Breast epithelium (tissue), 4 donors: ENCODE measurements at regions of chr11 and their contacts with region 1.

Region 1: GRCh38 chr11:124556828-124557227 is 13.0 kb upstream of the OR8A1 start:
- DNase-seq: no peak
- H3K4me3 ChIP-seq: no peak overlapping the region
- H3K27ac ChIP-seq: no peak overlapping the region
- H3K4me1 ChIP-seq: no peaks in the 10 kb centered on the region
- H3K27me3 ChIP-seq: no peaks in the 10 kb centered on the region
- CTCF ChIP-seq: no peak
- POLR2A ChIP-seq: no peak

Region 2: GRCh38 chr11:123775289-123775688 is 781.5 kb before region 1 on chr11:
- intact Hi-C with region 1: loop called (anchors 5 kb)
- DNase-seq: no peak
- H3K4me3 ChIP-seq: no peak overlapping the region
- H3K27ac ChIP-seq: no peak overlapping the region
- H3K4me1 ChIP-seq: no peaks in the 10 kb centered on the region
- H3K27me3 ChIP-seq: no peaks in the 10 kb centered on the region
- CTCF ChIP-seq: no peak
- POLR2A ChIP-seq: no peak